SK-N-SH (cell line): ENCODE measurements at regions of chr17 and their contacts with region 1.

Region 1: GRCh38 chr17:40617678-40618240 is 29.9 kb downstream of the SMARCE1 start:
- DNase-seq: peak; percentile 26
- H3K4me3 ChIP-seq: no peak overlapping the region
- H3K27ac ChIP-seq: no peak overlapping the region
- H3K4me1 ChIP-seq: peaks cover 0 to 12% of the 10 kb centered on the region in 2 experiments; a peak in 1 of 4 replicates
- H3K27me3 ChIP-seq: peaks cover 48% of the 10 kb centered on the region
- CTCF ChIP-seq: no peak
- EP300 ChIP-seq: no peak
- RAD21 ChIP-seq: no peak

Region 2: GRCh38 chr17:40472535-40473452 is 145.0 kb before region 1 on chr17:
- CTCF ChIA-PET with region 1: no interaction called
- POLR2A ChIA-PET with region 1: no interaction called
- DNase-seq: no peak
- H3K4me3 ChIP-seq: no peak overlapping the region
- H3K27ac ChIP-seq: peak overlapping the region in 1 of 2 experiments; percentile 87; a peak in 2 of 4 replicates
- H3K4me1 ChIP-seq: peaks cover 12 to 15% of the 10 kb centered on the region in 2 experiments; a peak in 3 of 4 replicates
- H3K27me3 ChIP-seq: no peaks in the 10 kb centered on the region
- CTCF ChIP-seq: no peak
- EP300 ChIP-seq: no peak
- RAD21 ChIP-seq: no peak

Region 3: DNA sequence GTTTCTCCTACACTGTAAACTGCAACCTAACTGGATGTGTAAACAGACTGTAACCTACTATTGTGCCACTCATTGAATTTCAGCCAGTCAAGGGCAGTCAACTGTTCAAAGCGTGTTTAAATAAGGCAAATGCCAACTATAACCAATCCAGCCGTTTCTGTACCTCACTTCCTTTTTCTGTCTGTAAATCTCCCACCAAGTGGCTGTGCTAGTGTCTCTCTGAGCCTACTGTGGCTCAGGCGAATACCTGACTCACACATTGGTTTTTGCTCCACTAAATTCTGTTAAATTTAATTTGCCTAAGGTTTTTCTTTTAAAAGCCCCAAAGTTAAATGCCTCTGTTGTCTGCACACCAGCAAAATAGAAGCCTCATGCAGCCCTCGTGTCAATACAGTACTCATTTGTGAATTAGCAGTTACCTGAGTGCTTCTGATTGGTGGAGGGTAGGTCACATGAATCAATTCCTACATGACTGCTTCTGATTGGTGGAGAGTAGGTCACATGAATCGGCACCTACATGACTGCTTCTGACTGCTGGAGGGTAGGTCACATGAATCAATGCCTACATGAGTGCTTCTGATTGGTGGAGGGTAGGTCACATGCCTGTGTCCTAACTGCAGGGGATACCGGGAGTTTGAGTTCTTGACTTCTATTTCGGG is 21.4 kb before region 1 on chr17:
- CTCF ChIA-PET with region 1: no interaction called
- POLR2A ChIA-PET with region 1: no interaction called
- DNase-seq: peak; percentile 32
- H3K4me3 ChIP-seq: no peak overlapping the region
- H3K27ac ChIP-seq: no peak overlapping the region
- H3K4me1 ChIP-seq: no peaks in the 10 kb centered on the region
- H3K27me3 ChIP-seq: no peaks in the 10 kb centered on the region; the same call in 1 of the 2 replicates
- CTCF ChIP-seq: no peak
- EP300 ChIP-seq: no peak
- RAD21 ChIP-seq: no peak

Region 4: GRCh38 chr17:40632216-40632615 is 14.5 kb after region 1 on chr17:
- CTCF ChIA-PET with region 1: interaction called, 37 read pairs
- POLR2A ChIA-PET with region 1: interaction called, 4 read pairs
- DNase-seq: no peak
- H3K4me3 ChIP-seq: no peak overlapping the region
- H3K27ac ChIP-seq: no peak overlapping the region; a peak in 1 of 4 replicates
- H3K4me1 ChIP-seq: no peaks in the 10 kb centered on the region
- H3K27me3 ChIP-seq: no peaks in the 10 kb centered on the region
- CTCF ChIP-seq: no peak
- EP300 ChIP-seq: no peak
- RAD21 ChIP-seq: no peak

Region 5: DNA sequence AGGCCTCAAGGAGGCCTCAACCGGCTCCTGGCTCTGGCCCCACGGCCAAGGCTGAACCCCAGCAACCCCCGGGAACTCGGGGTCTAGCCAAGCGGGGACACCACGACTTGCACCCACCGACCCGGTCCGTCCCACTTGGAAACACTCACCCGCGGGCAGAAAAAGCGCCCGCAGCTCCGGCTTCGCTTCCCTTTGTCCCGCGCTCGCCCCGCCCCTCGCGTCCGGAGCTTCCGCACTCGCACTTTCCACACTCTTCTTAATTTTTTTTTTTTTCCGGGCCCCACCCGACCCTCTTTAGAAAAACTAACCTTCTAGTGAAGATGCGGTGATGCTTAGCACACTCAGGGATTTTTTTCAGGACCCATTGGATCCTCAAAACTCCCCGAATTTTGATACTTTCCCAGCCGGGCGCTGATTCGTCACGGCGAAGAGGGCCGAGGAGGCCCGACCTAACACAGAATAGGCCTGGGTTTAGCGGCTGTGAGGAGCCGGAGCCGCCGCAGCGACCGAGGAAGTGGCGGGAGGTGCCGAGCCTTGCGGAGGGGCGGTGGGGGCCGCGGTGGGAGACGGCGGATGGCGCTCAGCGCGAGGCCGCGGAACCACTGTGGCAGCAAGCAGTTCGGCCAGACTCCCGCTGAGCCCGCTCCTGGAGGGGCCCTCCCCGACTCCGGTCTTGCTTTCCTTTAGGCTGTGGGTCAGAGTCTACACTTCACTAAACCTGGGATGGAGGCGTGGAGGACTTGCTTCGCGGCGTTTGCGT is 30.0 kb after region 1 on chr17 and contains the start of gene SMARCE1:
- CTCF ChIA-PET with region 1: interaction called, 16 read pairs
- POLR2A ChIA-PET with region 1: interaction called, 3 read pairs
- DNase-seq: peak; percentile 88
- H3K4me3 ChIP-seq: peak within 1 kb of the TSS; percentile 79 to 97
- H3K27ac ChIP-seq: peak within 1 kb of the TSS; percentile 92 to 95
- H3K4me1 ChIP-seq: peaks cover 19 to 21% of the 10 kb centered on the region in 2 experiments; a peak in 3 of 4 replicates
- H3K27me3 ChIP-seq: no peaks in the 10 kb centered on the region
- CTCF ChIP-seq: no peak
- EP300 ChIP-seq: peak; percentile 76 to 95; a peak in 3 of 4 replicates
- RAD21 ChIP-seq: no peak
- polyA plus RNA-seq, gene SMARCE1: 45.9 and 54.2 TPM in 2 replicates

Region 6: GRCh38 chr17:40791787-40792436 is 174.2 kb after region 1 on chr17:
- CTCF ChIA-PET with region 1: interaction called, 26 read pairs
- POLR2A ChIA-PET with region 1: no interaction called
- DNase-seq: peak; percentile 15
- H3K4me3 ChIP-seq: no peak overlapping the region; a peak in 1 of 4 replicates
- H3K27ac ChIP-seq: no peak overlapping the region
- H3K4me1 ChIP-seq: no peaks in the 10 kb centered on the region
- H3K27me3 ChIP-seq: peaks cover 65% of the 10 kb centered on the region
- CTCF ChIP-seq: peak; percentile 56
- EP300 ChIP-seq: no peak
- RAD21 ChIP-seq: peak; percentile 41